Spleen (tissue), 13 donors: ENCODE measurements at regions of chr6 and their contacts with region 1.

Region 1: DNA sequence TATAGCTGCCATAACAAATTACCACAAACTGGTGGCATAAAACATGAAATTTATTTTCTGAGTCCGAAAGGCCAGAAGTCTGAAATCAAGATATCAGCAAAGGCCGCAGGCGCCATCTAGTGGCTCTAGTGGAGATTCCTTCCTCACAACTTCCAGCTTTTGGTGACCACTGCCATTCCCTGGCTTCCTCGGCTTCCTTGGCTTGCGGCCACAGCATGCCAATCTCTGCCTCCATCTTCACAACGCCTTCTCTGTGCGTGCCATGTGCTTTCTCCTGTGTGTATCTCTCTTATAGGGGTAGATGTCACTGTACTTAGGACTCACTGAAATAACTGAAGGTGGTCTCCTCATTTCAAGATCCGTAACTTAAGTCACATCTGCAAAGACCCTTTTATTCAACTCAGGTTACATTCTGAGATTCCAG is 5.4 kb upstream of the PLAGL1 start:
- DNase-seq: peak; percentile 88
- H3K4me3 ChIP-seq: no peak overlapping the region
- H3K27ac ChIP-seq: no peak overlapping the region
- H3K4me1 ChIP-seq: peaks cover 0 to 10% (median 0%) of the 10 kb centered on the region in 6 donors
- H3K27me3 ChIP-seq: peaks cover 0 to 2% (median 0%) of the 10 kb centered on the region in 7 donors
- CTCF ChIP-seq: peak; percentile 30 to 90 (median 81)
- POLR2A ChIP-seq: no peak

Region 2: DNA sequence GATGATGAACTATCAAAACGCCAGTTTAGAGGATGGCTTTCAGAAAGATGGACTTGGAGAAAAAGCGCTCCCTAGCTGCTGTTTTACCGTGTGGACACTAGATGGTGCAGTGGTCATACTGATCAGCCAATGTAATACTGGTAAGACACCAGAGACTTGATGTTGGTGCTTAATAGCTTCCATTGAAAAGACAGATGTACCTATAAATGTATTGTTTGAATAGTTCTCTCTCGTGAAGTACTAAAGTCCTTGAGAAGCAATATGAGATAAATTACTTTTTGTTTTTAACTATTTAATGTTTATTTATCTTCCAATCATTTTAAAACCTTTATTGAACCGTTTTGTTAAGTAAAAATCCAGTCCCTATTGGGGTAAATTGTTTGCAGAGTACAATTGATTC is 438.1 kb before region 1 on chr6:
- intact Hi-C with region 1: loop called (anchors 2 kb)
- DNase-seq: no peak
- H3K4me3 ChIP-seq: no peak overlapping the region
- H3K27ac ChIP-seq: no peak overlapping the region
- H3K4me1 ChIP-seq: peaks cover 0 to 7% (median 2%) of the 10 kb centered on the region in 6 donors
- H3K27me3 ChIP-seq: no peaks in the 10 kb centered on the region
- CTCF ChIP-seq: peak; percentile 67 to 92 (median 87)
- POLR2A ChIP-seq: no peak

Region 3: GRCh38 chr6:143842902-143843676 is 170.4 kb before region 1 on chr6 and contains the start of gene LTV1:
- intact Hi-C with region 1: loop called (anchors 10 kb)
- DNase-seq: peak; percentile 98
- H3K4me3 ChIP-seq: peak within 1 kb of the TSS; percentile 67 to 96 (median 82)
- H3K27ac ChIP-seq: peak within 1 kb of the TSS; percentile 81 to 96 (median 93)
- H3K4me1 ChIP-seq: peaks cover 8 to 36% (median 26%) of the 10 kb centered on the region in 6 donors
- H3K27me3 ChIP-seq: no peaks in the 10 kb centered on the region
- CTCF ChIP-seq: peak in 6 of 11 experiments; percentile 18 to 45 (median 30)
- POLR2A ChIP-seq: peak in 1 of 3 donors; percentile 49
- total RNA-seq, gene LTV1: 12.4 to 25.8 (median 19.0) TPM

Region 4: GRCh38 chr6:144377586-144378210 is 364.2 kb after region 1 on chr6:
- intact Hi-C with region 1: no loop called
- DNase-seq: no peak
- H3K4me3 ChIP-seq: no peak overlapping the region
- H3K27ac ChIP-seq: peak overlapping the region in 5 of 8 donors; percentile 12 to 66 (median 42)
- H3K4me1 ChIP-seq: peaks cover 8 to 87% (median 46%) of the 10 kb centered on the region in 6 donors
- H3K27me3 ChIP-seq: no peaks in the 10 kb centered on the region
- CTCF ChIP-seq: no peak
- POLR2A ChIP-seq: no peak